Activated CD8-positive, alpha-beta T cell treated with anti-CD3 and anti-CD28 coated beads, Interleukin-2, amount 10 ng/mL, durations not matched to agents 7 days and 5 days (primary cell): ENCODE measurements at regions of chr21 and their contacts with region 1.

Region 1: DNA sequence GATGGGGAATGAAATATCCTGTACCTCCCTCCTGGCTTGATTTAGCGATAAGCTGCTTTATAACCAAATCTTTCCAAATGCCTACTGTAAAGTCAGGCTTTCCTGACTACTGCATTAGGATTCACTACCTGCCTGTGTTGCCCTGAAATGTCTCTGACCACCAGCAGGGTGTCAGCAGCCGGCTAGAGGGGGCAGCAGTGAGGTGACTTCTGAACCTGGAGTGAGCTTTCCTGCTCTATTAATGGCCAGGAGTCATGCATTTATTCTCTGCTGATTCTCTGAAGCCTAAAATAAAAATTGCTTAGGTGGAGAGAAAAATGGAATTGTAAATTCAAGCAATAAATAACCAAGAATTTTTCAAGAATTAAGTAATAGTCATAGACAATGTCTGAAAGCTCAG is 2.5 kb downstream of the BACE2 start:
- DNase-seq: peak; percentile 53
- ATAC-seq: no peak
- H3K4me3 Mint-ChIP-seq: no peak overlapping the region
- H3K27ac Mint-ChIP-seq: no peak overlapping the region
- H3K4me1 Mint-ChIP-seq: peaks cover 12% of the 10 kb centered on the region
- H3K27me3 Mint-ChIP-seq: peaks cover 36% of the 10 kb centered on the region

Region 2: DNA sequence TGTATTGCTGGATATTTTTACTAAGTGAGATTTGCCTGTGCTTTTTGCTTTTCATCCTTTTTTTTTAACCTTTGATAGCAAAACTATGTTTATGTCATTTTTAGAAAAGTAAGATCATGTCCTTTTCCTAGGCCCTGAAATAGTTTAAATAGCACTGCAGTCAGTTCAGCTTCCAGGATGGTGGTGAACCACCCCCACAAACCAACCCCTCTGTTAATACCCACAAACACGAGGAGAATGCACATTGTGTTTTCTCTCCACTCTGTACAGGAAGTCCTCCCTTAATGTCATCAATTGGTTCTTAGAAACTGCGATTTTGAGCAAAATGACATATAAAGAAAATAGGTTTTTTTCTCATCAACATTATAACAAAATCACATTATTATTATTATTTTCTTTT is 205.8 kb before region 1 on chr21:
- CTCF ChIA-PET with region 1: no interaction called
- POLR2A ChIA-PET with region 1: no interaction called
- DNase-seq: no peak
- ATAC-seq: no peak
- H3K4me3 Mint-ChIP-seq: no peak overlapping the region
- H3K27ac Mint-ChIP-seq: no peak overlapping the region
- H3K4me1 Mint-ChIP-seq: no peaks in the 10 kb centered on the region
- H3K27me3 Mint-ChIP-seq: no peaks in the 10 kb centered on the region

Region 3: DNA sequence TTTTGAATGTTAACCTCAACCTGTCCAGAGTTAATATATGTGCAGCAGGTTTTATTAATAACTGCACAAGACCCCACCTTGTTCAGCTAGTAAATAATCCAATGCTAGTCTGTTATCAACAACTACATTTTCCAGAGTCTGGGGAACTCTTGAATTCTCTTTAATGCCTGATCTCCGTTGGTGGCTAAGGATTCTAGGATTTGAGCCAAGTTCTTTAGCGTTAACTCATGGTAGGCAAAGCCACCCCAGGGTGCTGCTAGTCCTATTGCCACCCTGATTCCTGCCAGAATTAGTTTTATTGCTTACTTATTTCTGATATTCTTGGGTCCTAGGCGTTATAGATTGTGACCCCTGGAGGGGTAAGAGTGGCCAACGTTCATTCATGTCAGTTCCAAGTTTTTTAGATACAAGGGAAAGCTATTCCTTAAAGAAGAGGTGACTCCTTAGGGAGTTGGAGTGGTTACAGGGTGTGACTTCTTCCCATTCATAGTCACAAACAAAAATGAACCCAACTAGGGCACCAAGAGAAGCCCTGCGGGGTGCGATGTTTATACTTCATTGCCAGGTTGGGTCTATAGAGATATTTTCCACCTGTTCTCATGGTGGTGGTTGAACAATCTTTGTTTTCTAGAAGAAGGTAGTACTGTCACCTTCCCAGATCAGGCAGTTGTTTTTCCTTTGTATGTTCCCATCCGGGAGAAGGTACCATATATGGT is 10.5 kb after region 1 on chr21:
- CTCF ChIA-PET with region 1: interaction called, 12 read pairs
- POLR2A ChIA-PET with region 1: no interaction called
- DNase-seq: no peak
- ATAC-seq: no peak
- H3K4me3 Mint-ChIP-seq: no peak overlapping the region
- H3K27ac Mint-ChIP-seq: no peak overlapping the region
- H3K4me1 Mint-ChIP-seq: no peaks in the 10 kb centered on the region
- H3K27me3 Mint-ChIP-seq: peaks cover 9% of the 10 kb centered on the region